GM10248 (cell line): ENCODE measurements at regions of chr6 and their contacts with region 1.

Region 1: DNA sequence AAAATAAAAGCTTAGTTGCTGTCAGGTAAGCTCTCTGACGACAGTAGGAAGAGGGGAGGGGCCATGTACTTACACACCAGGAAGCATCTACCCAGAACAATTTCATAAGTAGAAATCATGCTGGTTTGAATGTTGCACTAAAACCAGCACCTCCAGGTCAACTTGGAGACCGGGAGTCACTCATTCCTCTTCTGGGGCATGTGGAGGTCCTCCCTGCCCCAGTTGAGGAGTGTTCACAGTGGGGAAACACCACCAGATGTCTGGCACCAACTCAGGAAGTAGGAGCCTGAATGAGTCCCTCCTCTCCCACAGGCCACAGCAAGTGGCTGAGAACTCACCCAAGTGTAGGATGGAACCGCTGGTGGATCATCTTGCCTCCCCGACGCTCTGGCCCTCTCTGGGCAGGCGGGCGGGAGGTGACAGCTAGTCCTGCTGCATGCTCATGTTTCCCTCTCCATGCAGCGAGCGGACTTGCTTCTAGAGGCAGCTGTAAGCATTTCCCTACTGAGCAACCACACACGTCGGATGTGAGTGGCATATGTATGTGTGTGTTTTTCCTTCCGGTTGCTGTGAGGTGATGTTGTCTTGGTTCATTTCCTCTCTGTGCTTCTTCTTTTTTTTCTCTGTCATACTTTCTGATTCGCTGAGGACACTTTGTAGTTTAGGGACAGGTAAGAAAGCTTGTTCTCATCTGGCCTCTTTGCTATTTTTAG is 149.5 kb upstream of the NEDD9 start:
- DNase-seq: peak; percentile 65
- CTCF ChIP-seq: no peak

Region 2: DNA sequence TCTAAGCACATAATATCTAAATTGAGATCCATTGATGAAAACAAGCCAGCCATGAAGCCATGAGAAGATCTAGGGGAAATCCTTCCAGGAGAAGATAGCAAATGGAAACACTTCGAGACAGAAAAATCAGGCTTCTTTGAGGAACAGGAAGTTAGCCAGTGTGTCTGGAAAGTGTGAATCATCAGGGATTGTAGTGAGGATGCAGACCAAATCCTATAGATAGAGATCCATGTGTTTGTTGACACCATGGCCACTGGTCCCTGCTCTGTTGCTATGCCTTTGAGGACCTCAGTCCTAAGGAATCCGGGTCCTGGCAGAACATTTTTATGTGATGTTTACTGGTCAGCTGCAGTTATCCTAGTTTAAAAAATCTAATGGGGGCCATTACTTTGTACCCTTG is 331.2 kb before region 1 on chr6:
- CTCF ChIA-PET with region 1: no interaction called
- POLR2A ChIA-PET with region 1: no interaction called
- DNase-seq: no peak
- CTCF ChIP-seq: no peak

Region 3: DNA sequence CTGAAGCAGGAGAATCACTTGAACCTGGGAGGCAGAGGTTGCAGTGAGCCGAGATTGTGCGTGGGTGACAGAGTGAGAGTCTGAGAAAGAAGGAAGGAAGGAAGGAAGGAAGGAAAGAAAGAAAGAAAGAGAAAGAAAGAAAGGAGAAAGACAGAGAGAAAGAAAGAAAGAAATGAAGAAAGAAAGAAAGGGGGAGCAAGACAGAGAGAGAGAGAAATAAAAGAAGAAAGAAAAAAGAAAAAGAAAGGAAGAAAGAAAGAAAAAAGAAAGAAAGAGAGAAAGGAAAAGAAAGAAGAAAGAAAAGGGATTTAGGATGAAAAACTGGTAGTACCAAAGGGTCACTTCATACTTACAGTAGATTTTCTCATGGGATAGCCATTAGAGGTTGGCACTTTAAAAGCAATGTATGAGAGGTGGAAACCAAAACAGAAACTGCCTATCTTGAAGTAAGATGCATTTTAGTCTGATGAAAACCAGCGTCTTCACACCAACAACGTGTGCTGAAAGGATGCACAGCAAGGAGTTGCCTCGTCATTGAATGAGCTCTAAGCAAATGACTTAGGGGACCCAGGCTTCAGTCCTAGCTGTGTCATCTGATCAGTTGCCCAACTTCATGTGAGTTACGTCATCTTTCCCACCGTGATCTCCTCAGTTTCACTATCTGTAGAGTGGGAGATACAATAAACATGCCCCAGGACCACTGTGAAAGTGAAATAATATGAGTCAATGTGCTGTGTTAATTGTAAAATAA is 15.6 kb before region 1 on chr6:
- CTCF ChIA-PET with region 1: interaction called, 26 read pairs
- POLR2A ChIA-PET with region 1: interaction called, 3 read pairs
- DNase-seq: peak; percentile 72
- CTCF ChIP-seq: no peak

Region 4: GRCh38 chr6:11404838-11405237 is 22.9 kb after region 1 on chr6:
- CTCF ChIA-PET with region 1: interaction called, 12 read pairs
- POLR2A ChIA-PET with region 1: no interaction called
- DNase-seq: no peak
- CTCF ChIP-seq: no peak